ENCODE measurements at regions of chr12 and their contacts with region 1.

Region 1: GRCh38 chr12:76559400-76560085 is at the start of gene OSBPL8:
- DNase-seq: peak; percentile 97
- ATAC-seq: peak; percentile 97
- total RNA-seq, gene OSBPL8: 24.9 TPM

Region 2: DNA sequence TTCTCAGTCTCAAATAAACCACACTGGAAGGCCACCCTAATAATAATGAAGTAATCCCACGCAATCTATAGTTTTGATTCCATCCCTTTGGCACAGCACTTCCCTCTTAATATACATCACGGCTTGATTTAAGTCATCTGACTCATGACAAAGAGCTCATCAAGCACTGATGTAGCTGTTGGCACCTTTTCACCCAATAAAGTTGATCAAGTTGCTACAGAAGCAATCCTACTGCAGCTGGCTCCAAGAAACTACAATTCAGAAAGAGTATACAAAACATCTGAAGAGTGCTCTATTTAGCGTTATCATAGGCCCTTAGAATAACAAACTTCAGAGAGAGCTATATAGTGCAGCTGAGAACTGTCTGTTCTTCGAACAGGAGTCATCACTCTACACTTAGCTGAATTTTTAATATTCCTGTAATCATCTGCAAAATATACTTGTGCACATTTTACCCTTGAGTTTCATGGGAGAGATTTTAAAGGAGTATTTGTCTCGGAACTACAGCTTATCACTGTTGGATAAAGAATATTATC is 94.8 kb before region 1 on chr12:
- intact Hi-C with region 1: loop called (anchors 5 kb)
- DNase-seq: no peak
- ATAC-seq: peak; percentile 53

Region 3: DNA sequence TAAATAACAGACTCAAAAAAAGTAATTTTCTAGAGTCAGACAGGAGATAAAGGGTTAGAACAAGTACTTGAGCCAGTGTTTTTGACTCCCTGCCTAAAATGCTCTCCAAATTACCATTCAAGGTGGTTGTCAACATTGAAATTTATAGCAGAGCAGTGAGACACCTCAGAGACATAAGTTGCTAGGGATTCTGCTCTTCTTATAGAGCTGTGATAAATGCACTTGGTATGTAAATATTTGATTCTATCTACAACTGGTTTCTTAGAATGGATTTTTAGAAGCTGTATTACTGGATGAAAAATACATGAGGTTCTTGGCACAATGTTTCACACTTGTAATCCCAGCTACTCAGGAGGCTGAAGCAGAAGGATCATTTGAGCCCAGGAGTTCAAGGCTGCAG is 83.9 kb after region 1 on chr12:
- intact Hi-C with region 1: no loop called
- DNase-seq: no peak
- ATAC-seq: no peak

Region 4: DNA sequence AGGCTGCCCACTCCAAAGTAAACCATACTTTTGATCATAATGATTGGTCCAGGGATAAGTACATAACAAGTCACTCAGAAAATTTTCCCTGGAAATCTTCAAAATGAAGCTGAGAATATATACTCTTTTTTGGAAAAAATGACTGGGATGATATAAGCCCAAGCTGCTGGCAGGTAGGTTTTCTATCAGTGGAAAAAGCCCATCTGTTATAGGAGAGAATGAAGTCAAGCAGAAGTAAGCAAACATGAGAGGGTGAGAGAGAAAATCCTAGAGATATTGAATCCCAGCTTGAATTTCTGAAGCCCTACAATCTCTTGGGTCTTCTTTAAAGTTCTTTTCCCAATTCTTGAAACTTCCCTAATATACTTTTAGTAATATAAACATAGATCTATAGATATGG is 167.1 kb after region 1 on chr12:
- intact Hi-C with region 1: no loop called
- DNase-seq: no peak
- ATAC-seq: no peak